ENCODE measurements at regions of chr5 and their contacts with region 1.

Region 1: GRCh38 chr5:43040287-43041098 is at the start of gene ANXA2R:
- DNase-seq: peak; percentile 84 to 93 (median 91)
- ATAC-seq: peak; percentile 61
- H3K4me3 ChIP-seq: peak within 1 kb of the TSS; percentile 52
- H3K27ac ChIP-seq: peak within 1 kb of the TSS; percentile 97
- H3K4me1 ChIP-seq: no peaks in the 10 kb centered on the region
- H3K27me3 ChIP-seq: no peaks in the 10 kb centered on the region
- total RNA-seq, gene ANXA2R: 0.95 to 1.9 (median 1.4) TPM

Region 2: GRCh38 chr5:42840269-42840668 is 200.2 kb before region 1 on chr5:
- intact Hi-C with region 1: no loop called
- DNase-seq: peak; percentile 58 to 89 (median 79)
- ATAC-seq: peak; percentile 68 to 79
- H3K4me3 ChIP-seq: no peak overlapping the region
- H3K27ac ChIP-seq: peak overlapping the region; percentile 77
- H3K4me1 ChIP-seq: peaks cover 12% of the 10 kb centered on the region
- H3K27me3 ChIP-seq: no peaks in the 10 kb centered on the region

Region 3: DNA sequence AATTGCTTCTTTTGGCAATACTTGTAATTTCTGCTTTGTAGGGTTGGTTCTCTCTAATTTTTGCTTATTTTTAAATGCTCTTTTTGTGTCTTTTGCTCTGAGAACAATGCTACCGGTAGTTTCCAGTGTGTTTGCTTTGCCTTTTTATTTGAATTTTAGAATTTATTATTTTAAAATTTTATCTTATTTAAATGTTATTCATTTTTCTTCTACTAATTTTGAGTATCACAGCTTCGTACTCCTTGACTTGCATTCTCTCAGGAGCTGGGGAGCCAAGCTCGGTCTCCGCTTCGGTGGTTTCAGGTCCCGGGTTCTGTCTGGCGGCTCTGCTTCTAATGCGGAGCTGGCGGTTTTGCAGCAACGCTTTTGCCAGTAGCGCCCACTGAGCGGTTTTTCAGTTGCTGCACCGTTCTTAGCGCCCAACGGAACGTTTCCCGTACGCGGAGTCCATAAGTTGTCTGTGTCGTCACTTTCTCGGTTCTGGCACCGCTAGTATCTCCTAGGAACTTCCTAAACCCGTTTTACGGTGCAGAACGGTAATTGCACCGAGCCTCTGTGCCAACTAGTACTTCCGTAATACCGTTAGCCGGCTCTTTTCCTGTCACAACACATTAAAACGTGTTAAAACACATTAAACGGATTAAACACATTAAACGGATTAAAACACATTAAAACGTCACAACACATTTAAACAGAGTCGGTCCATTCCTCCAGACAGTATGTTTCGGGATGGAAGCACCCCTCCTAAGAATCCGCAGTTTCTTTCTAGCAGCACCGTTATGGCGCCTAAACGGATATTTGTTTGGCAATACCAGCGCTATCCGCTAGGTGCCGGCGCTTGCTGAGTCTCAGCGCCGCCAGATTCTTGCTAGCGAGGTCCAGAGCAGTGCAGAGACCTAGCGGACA is 46.0 kb before region 1 on chr5:
- intact Hi-C with region 1: loop called in 2 of 4 experiments (anchors 2 to 5 kb)
- DNase-seq: peak; percentile 87 to 93 (median 92)
- ATAC-seq: peak; percentile 77 to 79
- H3K4me3 ChIP-seq: peak overlapping the region; percentile 51
- H3K27ac ChIP-seq: peak overlapping the region; percentile 94
- H3K4me1 ChIP-seq: no peaks in the 10 kb centered on the region
- H3K27me3 ChIP-seq: no peaks in the 10 kb centered on the region

Region 4: GRCh38 chr5:43019614-43020293 is 20.7 kb before region 1 on chr5:
- intact Hi-C with region 1: loop called in 1 of 4 experiments (anchors 2 kb)
- DNase-seq: peak in 2 of 3 donors; percentile 58 to 77
- ATAC-seq: peak; percentile 53 to 61
- H3K4me3 ChIP-seq: peak overlapping the region; percentile 36
- H3K27ac ChIP-seq: peak overlapping the region; percentile 87
- H3K4me1 ChIP-seq: no peaks in the 10 kb centered on the region
- H3K27me3 ChIP-seq: no peaks in the 10 kb centered on the region

Region 5: GRCh38 chr5:43065948-43066798 is 25.7 kb after region 1 on chr5:
- intact Hi-C with region 1: loop called in 2 of 4 experiments (anchors 2 kb)
- DNase-seq: peak; percentile 76 to 91 (median 89)
- ATAC-seq: peak; percentile 65 to 69
- H3K4me3 ChIP-seq: peak overlapping the region; percentile 95
- H3K27ac ChIP-seq: peak overlapping the region; percentile 100
- H3K4me1 ChIP-seq: peaks cover 7% of the 10 kb centered on the region
- H3K27me3 ChIP-seq: no peaks in the 10 kb centered on the region

Region 6: DNA sequence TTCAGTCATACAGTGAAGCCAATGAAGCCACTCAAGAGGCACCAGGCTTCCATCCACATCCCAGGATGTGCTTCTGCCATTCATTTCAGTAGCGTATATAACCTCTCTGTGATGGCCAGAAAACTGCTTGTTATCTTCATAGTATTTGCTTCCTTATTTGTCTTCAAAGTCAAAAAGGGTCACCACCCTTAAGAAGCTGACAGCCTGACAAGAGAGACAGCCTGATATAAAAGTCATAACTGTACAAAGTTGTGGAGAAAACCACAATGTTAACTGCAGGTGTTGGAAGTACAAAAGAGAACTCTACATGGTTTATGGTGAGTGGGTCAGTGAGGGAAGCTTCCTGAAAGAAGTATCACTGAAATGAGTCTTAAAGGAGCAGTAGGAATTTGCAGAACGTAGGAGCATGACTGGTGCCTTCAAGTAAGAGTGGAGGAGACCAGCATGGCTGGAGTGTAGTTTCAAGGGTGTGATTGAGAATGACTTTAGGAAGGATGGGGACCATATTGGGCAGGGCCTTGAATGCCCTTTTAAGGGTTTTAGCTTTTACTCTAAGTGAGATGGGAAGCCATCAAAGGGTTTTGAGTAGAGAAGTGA is 185.3 kb after region 1 on chr5:
- intact Hi-C with region 1: no loop called
- DNase-seq: no peak
- ATAC-seq: no peak
- H3K4me3 ChIP-seq: no peak overlapping the region
- H3K27ac ChIP-seq: no peak overlapping the region
- H3K4me1 ChIP-seq: no peaks in the 10 kb centered on the region
- H3K27me3 ChIP-seq: no peaks in the 10 kb centered on the region